WTC11 (cell line): ENCODE measurements at regions of chr4 and their contacts with region 1.

Region 1: GRCh38 chr4:12041828-12042227 is 613.1 kb upstream of the HS3ST1 start:
- DNase-seq: peak; percentile 15
- ATAC-seq: peak; percentile 67
- H3K4me3 Mint-ChIP-seq: no peak overlapping the region
- H3K27ac Mint-ChIP-seq: no peak overlapping the region
- H3K4me1 Mint-ChIP-seq: peaks cover 7% of the 10 kb centered on the region; the same call in 1 of the 2 replicates
- H3K27me3 Mint-ChIP-seq: peaks cover 11% of the 10 kb centered on the region; the same call in 1 of the 2 replicates
- CTCF ChIP-seq: peak; percentile 48; the same call in 1 of the 2 replicates

Region 2: GRCh38 chr4:12028258-12028657 is 13.6 kb before region 1 on chr4:
- CTCF ChIA-PET with region 1: no interaction called
- POLR2A ChIA-PET with region 1: no interaction called
- DNase-seq: no peak
- ATAC-seq: no peak
- H3K4me3 Mint-ChIP-seq: no peak overlapping the region
- H3K27ac Mint-ChIP-seq: no peak overlapping the region
- H3K4me1 Mint-ChIP-seq: no peaks in the 10 kb centered on the region
- H3K27me3 Mint-ChIP-seq: no peaks in the 10 kb centered on the region
- CTCF ChIP-seq: no peak

Region 3: GRCh38 chr4:12304905-12305304 is 263.1 kb after region 1 on chr4:
- CTCF ChIA-PET with region 1: no interaction called
- POLR2A ChIA-PET with region 1: no interaction called
- DNase-seq: no peak
- ATAC-seq: no peak
- H3K4me3 Mint-ChIP-seq: no peak overlapping the region
- H3K27ac Mint-ChIP-seq: no peak overlapping the region
- H3K4me1 Mint-ChIP-seq: no peaks in the 10 kb centered on the region
- H3K27me3 Mint-ChIP-seq: no peaks in the 10 kb centered on the region
- CTCF ChIP-seq: no peak

Region 4: DNA sequence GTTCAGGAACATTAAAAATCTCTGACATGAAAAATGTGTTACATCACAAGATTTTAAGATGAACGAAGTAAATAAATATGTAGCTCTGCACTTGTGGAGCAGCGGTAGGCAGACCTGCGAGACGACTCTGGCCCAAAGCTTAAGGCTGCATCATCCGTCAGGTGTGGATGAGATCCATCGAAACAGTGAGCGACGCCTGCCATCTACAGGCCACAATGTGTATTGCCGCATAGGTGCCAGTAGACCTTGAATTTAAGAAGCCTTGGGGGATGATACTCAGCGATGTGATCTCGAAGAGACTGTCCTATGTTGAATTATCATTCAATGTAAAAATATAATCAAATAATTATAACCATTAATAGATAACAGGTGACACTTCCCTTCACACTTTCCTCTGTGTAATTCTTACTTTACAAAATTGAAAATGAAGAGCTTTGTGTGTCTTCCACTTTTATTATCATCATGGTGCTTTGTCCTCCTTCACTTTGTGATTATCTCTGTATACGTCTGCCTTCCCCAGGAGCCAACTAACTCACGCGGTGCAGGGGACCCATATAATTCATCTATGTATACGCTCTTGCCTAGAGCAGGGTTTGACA is 591.3 kb after region 1 on chr4:
- CTCF ChIA-PET with region 1: interaction called, 11 read pairs
- POLR2A ChIA-PET with region 1: no interaction called
- DNase-seq: peak; percentile 89
- ATAC-seq: peak; percentile 99
- H3K4me3 Mint-ChIP-seq: no peak overlapping the region
- H3K27ac Mint-ChIP-seq: no peak overlapping the region
- H3K4me1 Mint-ChIP-seq: peaks cover 8% of the 10 kb centered on the region
- H3K27me3 Mint-ChIP-seq: peaks cover 3% of the 10 kb centered on the region
- CTCF ChIP-seq: peak; percentile 89